CD8-positive, alpha-beta T cell (primary cell): ENCODE measurements at regions of chr17 and their contacts with region 1.

Region 1: GRCh38 chr17:40098846-40099618 is 1.4 kb downstream of the NR1D1 start:
- DNase-seq: peak; percentile 97 to 100 (median 99)
- ATAC-seq: peak; percentile 64
- H3K4me3 ChIP-seq: peak overlapping the region; percentile 75 to 90
- H3K4me3 Mint-ChIP-seq: peak overlapping the region; percentile 94
- H3K27ac ChIP-seq: peak overlapping the region; percentile 79 to 98
- H3K27ac Mint-ChIP-seq: peak overlapping the region; percentile 95
- H3K4me1 ChIP-seq: peaks cover 80% of the 10 kb centered on the region
- H3K4me1 Mint-ChIP-seq: peaks cover 88% of the 10 kb centered on the region
- H3K27me3 ChIP-seq: no peaks in the 10 kb centered on the region
- H3K27me3 Mint-ChIP-seq: no peaks in the 10 kb centered on the region
- CTCF ChIP-seq: no peak

Region 2: GRCh38 chr17:39903158-39903884 is 195.7 kb before region 1 on chr17:
- CTCF ChIA-PET with region 1: no interaction called
- POLR2A ChIA-PET with region 1: no interaction called
- intact Hi-C with region 1: no loop called
- DNase-seq: peak in 2 of 9 experiments; percentile 18 to 46
- ATAC-seq: peak; percentile 58
- H3K4me3 ChIP-seq: no peak overlapping the region
- H3K4me3 Mint-ChIP-seq: peak overlapping the region; percentile 19
- H3K27ac ChIP-seq: peak overlapping the region in 1 of 2 experiments; percentile 38
- H3K27ac Mint-ChIP-seq: peak overlapping the region; percentile 53
- H3K4me1 ChIP-seq: peaks cover 11% of the 10 kb centered on the region
- H3K4me1 Mint-ChIP-seq: peaks cover 16% of the 10 kb centered on the region
- H3K27me3 ChIP-seq: no peaks in the 10 kb centered on the region
- H3K27me3 Mint-ChIP-seq: no peaks in the 10 kb centered on the region
- CTCF ChIP-seq: no peak

Region 3: GRCh38 chr17:39952680-39953470 is 146.2 kb before region 1 on chr17:
- CTCF ChIA-PET with region 1: no interaction called
- POLR2A ChIA-PET with region 1: no interaction called
- intact Hi-C with region 1: loop called in 1 of 2 experiments (anchors 5 kb)
- DNase-seq: peak; percentile 92 to 97 (median 95)
- ATAC-seq: peak; percentile 87
- H3K4me3 ChIP-seq: peak overlapping the region; percentile 66 to 80
- H3K4me3 Mint-ChIP-seq: peak overlapping the region; percentile 86
- H3K27ac ChIP-seq: peak overlapping the region; percentile 51 to 74
- H3K27ac Mint-ChIP-seq: peak overlapping the region; percentile 89
- H3K4me1 ChIP-seq: peaks cover 26% of the 10 kb centered on the region
- H3K4me1 Mint-ChIP-seq: peaks cover 22% of the 10 kb centered on the region
- H3K27me3 ChIP-seq: no peaks in the 10 kb centered on the region
- H3K27me3 Mint-ChIP-seq: no peaks in the 10 kb centered on the region
- CTCF ChIP-seq: no peak

Region 4: GRCh38 chr17:40121181-40122135 is 22.4 kb after region 1 on chr17 and contains the start of gene MSL1:
- CTCF ChIA-PET with region 1: interaction called, 237 read pairs
- POLR2A ChIA-PET with region 1: interaction called, 141 read pairs
- intact Hi-C with region 1: loop called in 1 of 2 experiments (anchors 1 kb)
- DNase-seq: peak; percentile 69 to 92 (median 85)
- ATAC-seq: peak; percentile 65
- H3K4me3 ChIP-seq: peak within 1 kb of the TSS; percentile 75 to 93
- H3K4me3 Mint-ChIP-seq: peak within 1 kb of the TSS; percentile 81
- H3K27ac ChIP-seq: peak within 1 kb of the TSS; percentile 40 to 71
- H3K27ac Mint-ChIP-seq: peak within 1 kb of the TSS; percentile 83
- H3K4me1 ChIP-seq: peaks cover 14% of the 10 kb centered on the region
- H3K4me1 Mint-ChIP-seq: peaks cover 44% of the 10 kb centered on the region
- H3K27me3 ChIP-seq: no peaks in the 10 kb centered on the region
- H3K27me3 Mint-ChIP-seq: no peaks in the 10 kb centered on the region
- CTCF ChIP-seq: no peak
- total RNA-seq, gene MSL1: 43.8 to 46.6 TPM

Region 5: GRCh38 chr17:40219073-40219860 is 120.2 kb after region 1 on chr17 and contains the start of gene WIPF2:
- CTCF ChIA-PET with region 1: interaction called, 4 read pairs
- POLR2A ChIA-PET with region 1: no interaction called
- intact Hi-C with region 1: loop called in 1 of 2 experiments (anchors 2 kb)
- DNase-seq: peak; percentile 92 to 98 (median 96)
- ATAC-seq: peak; percentile 90
- H3K4me3 ChIP-seq: peak within 1 kb of the TSS; percentile 83 to 87
- H3K4me3 Mint-ChIP-seq: peak within 1 kb of the TSS; percentile 95
- H3K27ac ChIP-seq: peak within 1 kb of the TSS; percentile 99
- H3K27ac Mint-ChIP-seq: peak within 1 kb of the TSS; percentile 100
- H3K4me1 ChIP-seq: peaks cover 8% of the 10 kb centered on the region
- H3K4me1 Mint-ChIP-seq: peaks cover 30% of the 10 kb centered on the region
- H3K27me3 ChIP-seq: no peaks in the 10 kb centered on the region
- H3K27me3 Mint-ChIP-seq: no peaks in the 10 kb centered on the region
- CTCF ChIP-seq: peak; percentile 53
- total RNA-seq, gene WIPF2: 26.8 to 30.8 TPM

Region 6: DNA sequence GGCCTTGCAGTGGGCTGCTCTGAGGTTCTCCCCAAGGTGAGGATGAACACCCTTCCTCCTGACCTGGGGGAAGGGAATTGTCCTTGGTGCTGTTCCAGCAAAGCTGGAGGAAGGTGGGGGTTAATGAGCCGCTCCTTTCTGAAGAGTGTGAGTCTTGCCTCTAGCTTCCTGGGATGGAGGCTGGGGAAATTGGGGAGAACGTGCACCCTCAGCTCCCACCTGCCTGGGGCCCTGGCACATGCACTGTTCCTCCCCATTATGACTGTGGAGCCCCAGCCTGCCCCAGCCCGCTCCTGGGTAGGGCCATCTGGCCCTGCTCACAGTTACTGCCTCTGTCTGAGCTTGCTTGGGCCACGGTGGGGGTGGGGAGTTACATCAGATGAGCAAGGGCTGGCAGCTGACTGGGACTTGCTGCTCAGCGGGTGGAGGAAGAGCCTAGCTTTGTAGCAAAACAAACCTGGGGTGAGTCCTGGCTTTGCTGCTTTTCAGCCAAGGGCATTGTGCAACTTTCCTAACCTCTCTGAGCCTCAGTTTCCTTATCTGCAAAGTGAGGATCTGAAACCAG is 391.3 kb after region 1 on chr17:
- CTCF ChIA-PET with region 1: no interaction called
- POLR2A ChIA-PET with region 1: no interaction called
- intact Hi-C with region 1: no loop called
- DNase-seq: no peak
- ATAC-seq: no peak
- H3K4me3 ChIP-seq: no peak overlapping the region
- H3K4me3 Mint-ChIP-seq: no peak overlapping the region
- H3K27ac ChIP-seq: no peak overlapping the region
- H3K27ac Mint-ChIP-seq: no peak overlapping the region
- H3K4me1 ChIP-seq: peaks cover 30% of the 10 kb centered on the region
- H3K4me1 Mint-ChIP-seq: peaks cover 37% of the 10 kb centered on the region
- H3K27me3 ChIP-seq: no peaks in the 10 kb centered on the region
- H3K27me3 Mint-ChIP-seq: no peaks in the 10 kb centered on the region
- CTCF ChIP-seq: no peak